SK-N-SH (cell line): ENCODE measurements at regions of chr22 and their contacts with region 1.

Region 1: GRCh38 chr22:32901613-32902324 is 100.3 kb downstream of the TIMP3 start:
- DNase-seq: no peak
- H3K4me3 ChIP-seq: no peak overlapping the region
- H3K27ac ChIP-seq: no peak overlapping the region
- H3K4me1 ChIP-seq: peaks cover 0 to 20% of the 10 kb centered on the region in 2 experiments; a peak in 2 of 4 replicates
- H3K27me3 ChIP-seq: no peaks in the 10 kb centered on the region
- CTCF ChIP-seq: no peak
- EP300 ChIP-seq: no peak
- RAD21 ChIP-seq: peak; percentile 39

Region 2: DNA sequence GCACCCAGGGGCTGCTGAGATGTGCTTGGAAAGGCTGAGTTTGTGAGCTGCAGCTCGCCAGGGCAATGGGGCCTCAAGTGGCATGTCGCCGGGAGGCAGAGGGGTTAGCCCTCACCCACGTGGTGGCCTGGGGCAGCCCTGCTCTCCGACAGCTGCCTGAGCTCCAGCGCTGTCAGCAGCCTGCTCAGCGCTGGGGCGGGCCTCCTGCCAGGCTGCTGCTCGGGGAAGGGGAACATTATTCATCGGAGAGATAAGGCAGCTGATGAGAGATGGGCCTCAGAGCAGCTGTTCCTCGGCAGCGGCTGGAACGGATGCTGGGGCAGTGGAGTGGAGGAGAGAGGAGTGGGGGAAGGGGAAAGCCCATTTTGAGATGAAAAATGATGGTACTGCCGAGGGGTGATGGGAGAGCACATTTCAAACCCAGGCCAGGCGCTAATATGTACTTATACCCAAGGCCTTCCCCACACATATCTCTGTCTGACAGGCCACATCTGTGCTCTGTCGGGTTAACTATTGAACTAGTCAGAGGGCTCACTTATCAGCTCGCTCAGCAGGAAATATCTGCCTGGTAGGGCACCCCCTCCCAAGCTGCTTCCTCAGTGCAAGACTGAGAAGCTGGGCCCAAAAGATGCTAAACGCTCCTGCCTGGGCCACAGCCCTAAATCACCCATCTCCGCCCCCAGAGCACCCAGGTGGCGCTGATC is 20.7 kb before region 1 on chr22:
- CTCF ChIA-PET with region 1: interaction called, 16 read pairs
- POLR2A ChIA-PET with region 1: interaction called, 5 read pairs
- DNase-seq: peak; percentile 89
- H3K4me3 ChIP-seq: no peak overlapping the region
- H3K27ac ChIP-seq: peak overlapping the region in 1 of 2 experiments; percentile 99; a peak in 2 of 4 replicates
- H3K4me1 ChIP-seq: peaks cover 0 to 42% of the 10 kb centered on the region in 2 experiments; a peak in 2 of 4 replicates
- H3K27me3 ChIP-seq: no peaks in the 10 kb centered on the region
- CTCF ChIP-seq: no peak
- EP300 ChIP-seq: peak in 1 of 2 experiments; percentile 94; a peak in 3 of 4 replicates
- RAD21 ChIP-seq: peak; percentile 32; the same call in 1 of the 2 replicates